Activated CD4-positive, alpha-beta T cell treated with anti-CD3 and anti-CD28 coated beads for 36 hours (primary cell): ENCODE measurements at regions of chr4 and their contacts with region 1.

Region 1: GRCh38 chr4:173685165-173685830 is 155.3 kb upstream of the HAND2 start:
- DNase-seq: no peak
- ATAC-seq: no peak
- H3K4me3 Mint-ChIP-seq: no peak overlapping the region
- H3K27ac Mint-ChIP-seq: no peak overlapping the region
- H3K4me1 Mint-ChIP-seq: no peaks in the 10 kb centered on the region
- H3K27me3 Mint-ChIP-seq: peaks cover 2% of the 10 kb centered on the region

Region 2: DNA sequence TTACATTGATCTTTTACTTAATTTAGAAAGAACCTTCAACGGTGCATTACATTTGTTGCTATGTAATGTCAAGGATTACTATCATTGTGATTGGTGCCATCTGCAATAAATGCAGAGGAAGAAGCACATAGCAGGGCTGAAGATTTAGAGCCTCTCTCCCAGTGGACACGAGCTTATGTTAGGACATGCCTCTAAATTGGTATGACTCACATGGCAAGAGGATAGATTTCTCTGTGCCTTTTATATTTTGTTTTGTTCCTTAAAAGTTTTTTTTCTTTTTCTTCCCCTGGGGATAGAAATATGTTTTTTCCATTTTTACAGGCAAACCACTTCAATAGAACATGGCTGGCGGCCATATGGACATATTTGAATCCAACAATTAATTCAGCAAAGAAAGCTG is 49.8 kb after region 1 on chr4:
- CTCF ChIA-PET with region 1: no interaction called
- POLR2A ChIA-PET with region 1: no interaction called
- intact Hi-C with region 1: loop called in 1 of 2 experiments (anchors 1 kb)
- DNase-seq: no peak
- ATAC-seq: no peak
- H3K4me3 Mint-ChIP-seq: no peak overlapping the region
- H3K27ac Mint-ChIP-seq: no peak overlapping the region
- H3K4me1 Mint-ChIP-seq: no peaks in the 10 kb centered on the region
- H3K27me3 Mint-ChIP-seq: no peaks in the 10 kb centered on the region